Posterior vena cava (tissue), 2 donors: ENCODE measurements at regions of chr3 and their contacts with region 1.

Region 1: DNA sequence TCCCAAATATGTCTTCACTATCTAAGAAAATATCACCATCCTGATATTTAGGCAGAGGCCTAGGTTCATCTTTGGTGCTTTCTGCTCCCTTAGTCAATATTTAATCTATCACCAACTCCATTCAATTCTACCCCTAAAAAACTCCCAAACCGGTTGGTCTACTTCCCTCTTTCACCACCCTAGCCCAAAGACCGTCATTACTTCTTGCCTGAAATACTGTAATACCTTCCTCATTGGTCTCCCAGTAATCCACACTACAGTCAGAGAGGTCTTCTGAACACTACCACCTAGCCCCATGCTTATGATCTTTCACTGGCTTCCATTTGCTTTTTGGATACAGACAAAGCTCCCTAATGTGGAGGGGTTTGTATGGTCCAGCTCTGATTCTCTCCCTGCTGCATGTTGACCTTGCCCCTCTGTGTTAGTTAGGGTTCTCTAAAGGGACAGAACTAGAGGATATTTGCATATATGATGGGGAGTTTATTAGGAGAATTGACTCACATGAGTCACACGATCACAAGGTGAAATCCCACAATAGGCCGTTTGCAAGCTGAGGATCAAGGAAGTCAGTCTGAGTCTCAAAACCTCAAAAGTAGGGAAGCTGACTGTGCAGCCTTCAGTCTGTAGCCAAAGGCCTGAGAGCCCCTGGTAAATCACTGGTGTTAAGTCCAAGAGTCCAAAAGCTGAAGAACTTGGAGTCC is 36.4 kb upstream of the ATP2C1 start:
- DNase-seq: no peak

Region 2: DNA sequence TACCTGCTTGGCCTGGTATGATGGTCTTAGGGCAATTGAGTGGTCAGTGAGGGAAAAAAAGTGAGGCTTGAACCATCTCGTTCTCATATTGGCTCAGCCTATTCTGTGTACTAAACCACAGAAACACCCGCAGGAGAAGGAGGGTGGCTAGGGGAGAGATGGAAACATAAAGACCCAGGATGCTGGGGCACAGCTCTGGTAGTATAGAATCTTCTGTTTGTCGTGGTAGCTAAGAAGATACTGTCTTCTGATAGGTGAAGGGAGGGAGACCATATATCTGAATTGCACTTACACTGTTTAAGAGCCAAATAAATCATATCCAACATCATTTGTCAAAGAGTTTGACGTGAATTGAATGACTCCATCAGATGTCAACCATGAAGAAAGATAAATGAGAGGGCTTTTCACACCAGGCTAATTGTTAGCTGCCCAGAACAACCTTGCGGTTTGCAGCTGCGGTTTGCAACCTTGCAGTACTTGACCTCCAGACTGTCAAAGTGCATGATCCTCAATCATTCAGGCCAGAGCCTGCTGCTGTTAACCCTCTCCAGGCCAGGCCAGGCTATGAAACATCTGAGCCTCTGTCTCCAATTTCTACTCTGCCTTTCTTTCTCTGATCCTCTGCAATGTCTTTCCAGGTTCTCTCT is 69.9 kb before region 1 on chr3:
- intact Hi-C with region 1: loop called in 1 of 2 experiments (anchors 2 kb)
- DNase-seq: no peak